GM12878 (cell line): ENCODE measurements at regions of chr11 and their contacts with region 1.

Region 1: GRCh38 chr11:36899800-36900199 is 301.8 kb upstream of the RAG2 start:
- DNase-seq: no peak
- ATAC-seq: no peak
- H3K4me3 ChIP-seq: no peak overlapping the region
- H3K27ac ChIP-seq: no peak overlapping the region
- H3K4me1 ChIP-seq: no peaks in the 10 kb centered on the region
- H3K27me3 ChIP-seq: no peaks in the 10 kb centered on the region
- CTCF ChIP-seq: no peak
- EP300 ChIP-seq: no peak
- POLR2A ChIP-seq: no peak
- RAD21 ChIP-seq: no peak

Region 2: GRCh38 chr11:36854875-36855274 is 44.9 kb before region 1 on chr11:
- CTCF ChIA-PET with region 1: no interaction called
- POLR2A ChIA-PET with region 1: no interaction called
- RAD21 ChIA-PET with region 1: no interaction called
- SMC1A ChIA-PET with region 1: no interaction called
- in situ Hi-C with region 1: loop called (anchors 5 kb)
- intact Hi-C with region 1: no loop called
- DNase-seq: no peak
- ATAC-seq: no peak
- H3K4me3 ChIP-seq: no peak overlapping the region
- H3K27ac ChIP-seq: no peak overlapping the region
- H3K4me1 ChIP-seq: no peaks in the 10 kb centered on the region
- H3K27me3 ChIP-seq: no peaks in the 10 kb centered on the region
- CTCF ChIP-seq: no peak
- EP300 ChIP-seq: no peak
- POLR2A ChIP-seq: no peak
- RAD21 ChIP-seq: no peak

Region 3: DNA sequence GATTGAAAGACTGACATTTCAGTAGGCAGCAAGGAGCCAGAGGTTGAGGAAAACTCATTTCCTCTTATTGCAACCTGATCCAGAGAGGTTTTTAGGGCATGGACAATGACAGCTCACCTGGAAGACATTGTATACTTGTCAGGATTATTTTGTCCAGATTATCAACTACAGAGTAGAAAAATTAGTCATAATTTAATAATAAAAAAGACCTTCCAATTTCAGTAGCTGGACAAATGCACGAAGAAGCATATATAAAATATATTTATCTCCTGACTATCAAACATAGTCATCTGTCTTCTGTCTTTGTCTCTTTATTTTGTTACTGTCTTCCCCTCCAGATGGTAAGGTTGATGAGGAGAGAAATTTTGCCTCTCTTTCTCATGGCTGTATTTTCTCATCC is 28.8 kb after region 1 on chr11:
- CTCF ChIA-PET with region 1: no interaction called
- POLR2A ChIA-PET with region 1: no interaction called
- RAD21 ChIA-PET with region 1: no interaction called
- SMC1A ChIA-PET with region 1: no interaction called
- in situ Hi-C with region 1: no loop called
- intact Hi-C with region 1: no loop called
- DNase-seq: no peak
- ATAC-seq: no peak
- H3K4me3 ChIP-seq: no peak overlapping the region
- H3K27ac ChIP-seq: no peak overlapping the region
- H3K4me1 ChIP-seq: no peaks in the 10 kb centered on the region
- H3K27me3 ChIP-seq: no peaks in the 10 kb centered on the region
- CTCF ChIP-seq: no peak
- EP300 ChIP-seq: no peak
- POLR2A ChIP-seq: no peak
- RAD21 ChIP-seq: no peak

Region 4: DNA sequence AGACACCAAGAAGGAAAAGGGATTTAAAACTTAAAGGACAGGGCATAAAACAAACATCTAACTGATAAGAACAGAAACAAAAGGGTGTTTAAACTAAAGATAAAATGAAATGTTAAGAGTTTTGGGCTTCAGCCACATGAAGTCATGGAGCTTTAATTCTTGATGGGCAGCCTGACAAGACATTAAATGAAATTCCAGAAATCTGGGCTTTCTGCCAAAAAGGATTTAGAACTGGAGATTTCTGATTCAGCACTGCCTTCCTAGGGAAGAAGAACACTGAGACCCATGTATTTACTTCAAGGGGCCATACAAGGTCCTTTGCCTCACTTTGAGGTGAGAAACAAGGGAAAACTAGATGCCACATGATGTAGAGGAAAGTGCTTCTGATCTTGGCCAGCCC is 54.2 kb after region 1 on chr11:
- CTCF ChIA-PET with region 1: no interaction called
- POLR2A ChIA-PET with region 1: no interaction called
- RAD21 ChIA-PET with region 1: no interaction called
- SMC1A ChIA-PET with region 1: no interaction called
- in situ Hi-C with region 1: loop called (anchors 5 kb)
- intact Hi-C with region 1: no loop called
- DNase-seq: no peak
- ATAC-seq: no peak
- H3K4me3 ChIP-seq: no peak overlapping the region
- H3K27ac ChIP-seq: no peak overlapping the region
- H3K4me1 ChIP-seq: no peaks in the 10 kb centered on the region
- H3K27me3 ChIP-seq: no peaks in the 10 kb centered on the region
- CTCF ChIP-seq: no peak
- EP300 ChIP-seq: no peak
- POLR2A ChIP-seq: no peak
- RAD21 ChIP-seq: no peak

Region 5: GRCh38 chr11:37504060-37504611 is 604.3 kb after region 1 on chr11:
- CTCF ChIA-PET with region 1: no interaction called
- POLR2A ChIA-PET with region 1: no interaction called
- RAD21 ChIA-PET with region 1: no interaction called
- SMC1A ChIA-PET with region 1: no interaction called
- in situ Hi-C with region 1: no loop called
- intact Hi-C with region 1: no loop called
- DNase-seq: peak; percentile 78
- ATAC-seq: peak; percentile 93
- H3K4me3 ChIP-seq: no peak overlapping the region; the same call in 1 of the 2 replicates
- H3K27ac ChIP-seq: peak overlapping the region; percentile 34; the same call in 1 of the 2 replicates
- H3K4me1 ChIP-seq: peaks cover 18% of the 10 kb centered on the region
- H3K27me3 ChIP-seq: no peaks in the 10 kb centered on the region
- CTCF ChIP-seq: no peak
- EP300 ChIP-seq: peak; percentile 96 to 98
- POLR2A ChIP-seq: no peak
- RAD21 ChIP-seq: 0 out of 2 replicates have a peak, but pooled peaks have one; percentile 7